ENCODE measurements at regions of chr11 and their contacts with region 1.

Region 1: GRCh38 chr11:88131764-88132470 is 43.3 kb downstream of the RAB38 start:
- DNase-seq: no peak
- CTCF ChIP-seq: no peak

Region 2: DNA sequence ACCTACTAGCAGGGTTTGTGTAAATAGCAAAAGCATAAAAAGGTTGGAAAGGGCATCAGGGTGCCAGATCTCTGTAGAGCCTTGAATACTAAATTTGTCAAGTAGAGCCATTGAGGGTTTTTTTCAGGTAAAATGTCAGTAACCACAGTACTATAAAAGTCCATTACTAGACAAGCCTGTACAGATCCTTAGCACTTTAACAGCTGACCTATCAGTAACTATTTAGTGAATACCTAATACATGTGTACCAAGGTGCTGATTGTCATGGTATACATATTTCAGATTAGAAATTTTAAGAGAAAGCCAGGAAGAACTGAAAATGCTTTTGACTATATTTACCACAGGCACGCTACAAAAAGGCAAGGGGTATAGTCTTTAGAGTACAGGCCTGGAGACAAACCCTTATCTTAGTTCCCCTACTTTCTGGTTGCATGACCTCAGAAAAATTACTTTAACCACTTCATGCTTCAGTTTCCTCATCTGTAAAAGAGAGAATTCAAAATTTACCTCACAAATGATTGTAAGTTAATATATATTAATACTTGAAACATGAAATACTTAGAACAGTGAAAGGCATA is 14.5 kb before region 1 on chr11:
- CTCF ChIA-PET with region 1: no interaction called
- POLR2A ChIA-PET with region 1: no interaction called
- DNase-seq: no peak
- CTCF ChIP-seq: no peak

Region 3: GRCh38 chr11:88146106-88146505 is 14.2 kb after region 1 on chr11:
- CTCF ChIA-PET with region 1: interaction called, 10 read pairs
- POLR2A ChIA-PET with region 1: no interaction called
- DNase-seq: no peak
- CTCF ChIP-seq: no peak

Measured in GM10248 (cell line).